Uterus (tissue), 4 donors: ENCODE measurements at regions of chr3 and their contacts with region 1.

Region 1: DNA sequence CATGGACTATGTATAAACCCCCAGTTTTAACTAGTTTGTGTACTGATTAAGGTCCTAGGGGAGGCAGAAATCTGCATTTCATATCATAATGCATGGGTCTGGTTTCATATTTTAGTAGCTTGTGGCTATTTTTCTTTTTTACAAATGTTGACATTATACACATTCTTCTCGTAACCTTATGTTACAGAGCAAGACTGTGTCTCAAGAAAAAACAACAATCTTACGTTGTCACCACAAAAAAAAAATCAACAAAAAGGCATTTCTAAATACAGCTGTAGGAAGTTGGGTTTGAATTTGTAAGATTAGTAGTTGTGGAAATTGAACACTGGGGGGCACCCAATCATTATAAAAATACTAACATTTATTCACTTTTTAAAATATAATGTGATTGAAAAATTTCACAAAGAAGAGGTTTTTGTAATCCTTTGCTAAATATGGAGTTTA is 17.9 kb downstream of the SERP1 start:
- DNase-seq: no peak
- H3K4me3 ChIP-seq: no peak overlapping the region
- H3K27ac ChIP-seq: no peak overlapping the region
- H3K4me1 ChIP-seq: no peaks in the 10 kb centered on the region
- H3K27me3 ChIP-seq: no peaks in the 10 kb centered on the region
- CTCF ChIP-seq: peak in 1 of 4 experiments; percentile 24
- POLR2A ChIP-seq: no peak

Region 2: DNA sequence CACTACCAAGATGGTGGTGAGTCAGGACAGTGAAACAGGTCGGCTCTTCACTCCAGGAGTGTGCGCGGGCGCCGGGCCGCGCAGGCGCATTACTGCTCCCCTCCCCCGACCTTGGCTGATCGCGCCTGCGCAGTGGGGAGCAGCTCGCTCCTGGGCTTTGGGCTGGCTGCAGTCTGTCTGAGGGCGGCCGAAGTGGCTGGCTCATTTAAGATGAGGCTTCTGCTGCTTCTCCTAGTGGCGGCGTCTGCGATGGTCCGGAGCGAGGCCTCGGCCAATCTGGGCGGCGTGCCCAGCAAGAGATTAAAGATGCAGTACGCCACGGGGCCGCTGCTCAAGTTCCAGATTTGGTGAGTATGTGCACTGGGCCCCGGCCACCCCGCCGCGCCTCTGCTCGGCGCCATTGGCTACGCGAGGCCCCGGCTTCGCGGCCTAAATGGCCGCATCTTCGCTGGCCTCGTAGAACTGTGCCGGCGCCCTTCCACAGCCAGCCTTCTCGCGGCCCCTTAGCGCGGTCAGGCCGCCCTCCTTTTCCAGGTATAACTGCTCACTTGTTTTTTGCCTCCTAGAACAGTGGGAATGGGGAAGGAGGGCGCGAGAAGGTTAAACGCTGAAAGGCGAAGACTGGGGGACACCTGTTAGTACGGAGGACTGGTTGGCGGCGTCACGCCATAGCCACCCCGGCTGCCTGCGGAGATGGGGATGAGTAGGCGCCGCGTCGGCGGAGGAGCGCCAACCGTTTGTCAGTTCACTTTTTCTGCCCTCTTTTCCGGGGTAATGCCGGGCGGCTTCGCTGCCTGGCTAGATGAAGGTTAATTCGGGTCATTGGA is 75.0 kb after region 1 on chr3 and contains the start of gene SELENOT:
- intact Hi-C with region 1: no loop called
- DNase-seq: peak; percentile 95 to 96
- H3K4me3 ChIP-seq: peak within 1 kb of the TSS; percentile 62 to 72
- H3K27ac ChIP-seq: peak within 1 kb of the TSS; percentile 93 to 95
- H3K4me1 ChIP-seq: no peaks in the 10 kb centered on the region
- H3K27me3 ChIP-seq: no peaks in the 10 kb centered on the region
- CTCF ChIP-seq: peak in 3 of 4 experiments; percentile 29 to 50 (median 43)
- POLR2A ChIP-seq: peak; percentile 87 to 95
- total RNA-seq, gene SELENOT: 98.0 to 158 (median 111) TPM

Region 3: GRCh38 chr3:150710097-150710496 is 181.7 kb after region 1 on chr3:
- intact Hi-C with region 1: loop called (anchors 5 kb)
- DNase-seq: no peak
- H3K4me3 ChIP-seq: no peak overlapping the region
- H3K27ac ChIP-seq: no peak overlapping the region
- H3K4me1 ChIP-seq: no peaks in the 10 kb centered on the region
- H3K27me3 ChIP-seq: no peaks in the 10 kb centered on the region
- CTCF ChIP-seq: no peak
- POLR2A ChIP-seq: no peak